Sciatic nerve (tissue), 2 donors: ENCODE measurements at regions of chr3 and their contacts with region 1.

Region 1: GRCh38 chr3:65245133-65246063 is 557.6 kb upstream of the ADAMTS9 start:
- DNase-seq: no peak
- ATAC-seq: peak; percentile 64

Region 2: GRCh38 chr3:65181391-65181871 is 64.0 kb before region 1 on chr3:
- intact Hi-C with region 1: loop called (anchors 10 kb)
- DNase-seq: no peak
- ATAC-seq: peak; percentile 92